HEK293 (cell line): ENCODE measurements at regions of chr19 and their contacts with region 1.

Region 1: GRCh38 chr19:48391107-48391986 is at the start of gene KDELR1:
- H3K4me3 ChIP-seq: peak within 1 kb of the TSS; percentile 86
- H3K27ac ChIP-seq: peak within 1 kb of the TSS; percentile 94
- H3K4me1 ChIP-seq: peaks cover 10% of the 10 kb centered on the region
- CTCF ChIP-seq: peak; percentile 95

Region 2: GRCh38 chr19:48351341-48351752 is 40.0 kb before region 1 on chr19:
- CTCF ChIA-PET with region 1: interaction called, 25 read pairs
- POLR2A ChIA-PET with region 1: no interaction called
- H3K4me3 ChIP-seq: no peak overlapping the region
- H3K27ac ChIP-seq: no peak overlapping the region
- H3K4me1 ChIP-seq: no peaks in the 10 kb centered on the region
- CTCF ChIP-seq: peak; percentile 80

Region 3: DNA sequence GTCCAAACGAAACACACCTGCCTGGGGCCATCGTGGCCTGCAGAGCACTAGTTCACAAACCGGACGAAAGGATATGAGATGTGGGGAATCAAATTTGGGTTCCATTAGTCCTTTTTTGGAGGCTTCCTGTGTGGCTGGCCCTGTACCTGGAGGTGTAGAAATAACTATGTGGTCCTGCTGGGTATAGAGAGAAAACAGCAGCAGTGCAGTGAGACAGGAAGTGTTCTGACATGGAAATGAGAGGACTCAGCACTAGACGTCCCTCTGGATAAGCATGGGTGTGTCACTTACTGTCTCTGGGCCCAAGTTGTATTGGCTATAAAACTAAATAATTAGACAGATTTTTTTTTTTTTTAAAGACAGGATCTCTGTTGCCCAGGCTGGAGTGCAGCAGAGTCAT is 12.3 kb before region 1 on chr19:
- CTCF ChIA-PET with region 1: interaction called, 14 read pairs
- POLR2A ChIA-PET with region 1: interaction called, 14 read pairs
- H3K4me3 ChIP-seq: no peak overlapping the region
- H3K27ac ChIP-seq: no peak overlapping the region; the same call in 1 of the 2 replicates
- H3K4me1 ChIP-seq: no peaks in the 10 kb centered on the region
- CTCF ChIP-seq: no peak

Region 4: GRCh38 chr19:48415395-48415794 is 24.0 kb after region 1 on chr19:
- CTCF ChIA-PET with region 1: interaction called, 10 read pairs
- POLR2A ChIA-PET with region 1: interaction called, 9 read pairs
- H3K4me3 ChIP-seq: no peak overlapping the region
- H3K27ac ChIP-seq: no peak overlapping the region
- H3K4me1 ChIP-seq: peaks cover 8% of the 10 kb centered on the region; the same call in 1 of the 2 replicates
- CTCF ChIP-seq: no peak

Region 5: GRCh38 chr19:48513289-48514122 is 122.2 kb after region 1 on chr19:
- CTCF ChIA-PET with region 1: no interaction called
- POLR2A ChIA-PET with region 1: no interaction called
- H3K4me3 ChIP-seq: peak overlapping the region; percentile 61
- H3K27ac ChIP-seq: no peak overlapping the region; the same call in 1 of the 2 replicates
- H3K4me1 ChIP-seq: no peaks in the 10 kb centered on the region
- CTCF ChIP-seq: peak; percentile 22; the same call in 1 of the 2 replicates

Region 6: GRCh38 chr19:48588670-48589399 is 197.5 kb after region 1 on chr19:
- CTCF ChIA-PET with region 1: interaction called, 10 read pairs
- POLR2A ChIA-PET with region 1: interaction called, 5 read pairs
- H3K4me3 ChIP-seq: peak overlapping the region; percentile 47
- H3K27ac ChIP-seq: no peak overlapping the region
- H3K4me1 ChIP-seq: no peaks in the 10 kb centered on the region
- CTCF ChIP-seq: peak; percentile 100